ENCODE measurements at regions of chr20 and their contacts with region 1.

Region 1: GRCh38 chr20:37020636-37021035 is 69.1 kb upstream of the SAMHD1 start:
- DNase-seq: no peak
- ATAC-seq: no peak
- H3K4me3 ChIP-seq: no peak overlapping the region
- H3K27ac ChIP-seq: no peak overlapping the region
- H3K4me1 ChIP-seq: no peaks in the 10 kb centered on the region
- H3K27me3 ChIP-seq: no peaks in the 10 kb centered on the region
- CTCF ChIP-seq: no peak

Region 2: DNA sequence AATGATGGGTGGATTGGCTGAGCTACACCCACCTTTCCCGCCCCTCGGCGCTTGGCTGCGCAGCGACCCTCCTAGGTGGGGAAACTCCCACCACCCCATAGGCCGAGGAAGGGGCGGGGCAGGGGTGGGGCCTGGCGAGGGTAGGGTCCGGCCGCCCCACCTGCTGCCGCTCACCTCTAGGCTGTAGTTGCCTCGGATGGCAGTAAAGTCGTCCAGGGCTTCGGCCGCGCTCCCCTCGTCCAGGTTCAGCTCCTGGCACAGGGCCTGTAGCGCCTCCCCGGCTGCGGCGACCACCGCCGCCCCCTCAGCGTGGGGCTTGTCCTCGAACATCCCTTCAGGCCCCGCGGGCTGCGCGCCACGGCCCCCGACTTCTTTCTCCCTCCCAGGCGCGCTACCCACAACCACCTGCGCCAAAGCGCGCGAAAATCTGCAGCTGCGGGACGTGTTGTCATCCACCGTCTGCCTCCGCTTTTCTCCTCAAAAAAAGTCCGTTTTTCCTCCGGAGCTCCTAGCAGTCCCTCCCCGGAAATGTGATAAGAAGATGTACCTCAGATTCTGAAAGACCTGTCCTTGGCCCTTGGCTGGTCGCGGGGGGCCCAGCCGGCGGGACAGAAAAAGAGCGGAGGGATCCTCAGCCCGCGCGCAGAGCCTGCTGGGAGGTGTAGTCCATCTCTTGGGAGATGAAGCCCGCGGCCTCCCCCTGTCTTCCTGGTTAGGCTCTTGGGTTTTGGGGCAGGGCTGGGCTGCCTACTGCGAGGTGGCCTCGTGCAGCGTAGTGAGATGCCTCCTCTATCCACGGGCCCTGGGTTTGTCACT is 75.2 kb after region 1 on chr20 and contains the start of gene RBL1:
- CTCF ChIA-PET with region 1: no interaction called
- POLR2A ChIA-PET with region 1: no interaction called
- in situ Hi-C with region 1: no loop called
- intact Hi-C with region 1: no loop called
- DNase-seq: peak; percentile 57
- ATAC-seq: peak; percentile 93
- H3K4me3 ChIP-seq: peak within 1 kb of the TSS; percentile 67 to 93
- H3K27ac ChIP-seq: peak within 1 kb of the TSS; percentile 92
- H3K4me1 ChIP-seq: peaks cover 5% of the 10 kb centered on the region
- H3K27me3 ChIP-seq: no peaks in the 10 kb centered on the region
- CTCF ChIP-seq: no peak
- total RNA-seq, gene RBL1: 14.0 TPM

Region 3: DNA sequence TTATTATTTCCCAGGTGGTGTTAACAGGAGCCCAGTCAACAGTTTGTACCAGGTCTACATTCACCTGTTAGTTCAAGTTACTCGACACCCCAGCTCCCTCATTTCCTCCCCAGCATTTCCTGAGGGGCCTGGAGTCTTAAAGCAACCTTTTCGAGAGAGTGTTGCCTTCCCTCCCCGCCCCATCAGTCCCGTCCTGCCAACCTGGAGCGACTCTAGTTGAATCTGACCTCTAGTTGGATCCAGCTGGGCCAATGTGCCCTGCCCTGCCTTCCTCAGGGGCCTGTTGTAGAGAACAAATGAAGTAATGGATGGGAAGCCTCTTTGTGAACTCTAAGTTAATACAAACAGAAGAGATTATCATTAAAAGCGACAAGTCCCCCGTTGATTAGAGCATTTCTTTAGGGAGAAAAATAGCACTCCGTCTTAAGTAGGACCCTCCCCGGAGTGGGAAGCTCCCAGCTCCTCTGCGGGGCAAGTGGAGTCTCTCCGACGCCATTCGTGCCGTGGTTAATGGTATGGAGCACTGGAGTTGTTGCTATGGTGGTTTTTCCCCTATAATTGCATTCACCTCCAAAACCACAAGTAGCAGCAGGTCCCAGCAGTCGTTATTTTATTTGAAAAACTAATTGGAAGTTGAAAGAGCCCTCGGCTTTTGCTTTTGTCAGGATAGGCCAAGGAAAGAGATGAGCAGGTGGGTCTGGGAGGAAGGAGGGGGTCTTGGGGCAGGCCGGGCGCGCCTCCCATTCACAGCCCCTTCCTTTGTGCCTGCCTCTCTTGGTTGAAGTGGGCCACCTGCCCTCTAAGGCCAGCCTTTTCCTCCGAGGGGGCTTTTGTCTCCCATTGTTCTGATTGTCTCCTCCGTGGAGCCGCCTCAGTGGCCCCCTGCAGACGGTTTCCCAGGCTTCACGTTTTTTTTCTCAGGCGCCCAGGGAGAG is 224.8 kb after region 1 on chr20:
- CTCF ChIA-PET with region 1: interaction called, 10 read pairs
- POLR2A ChIA-PET with region 1: no interaction called
- in situ Hi-C with region 1: no loop called
- intact Hi-C with region 1: no loop called
- DNase-seq: no peak
- ATAC-seq: no peak
- H3K4me3 ChIP-seq: no peak overlapping the region
- H3K27ac ChIP-seq: no peak overlapping the region
- H3K4me1 ChIP-seq: no peaks in the 10 kb centered on the region
- H3K27me3 ChIP-seq: no peaks in the 10 kb centered on the region
- CTCF ChIP-seq: no peak

Measured in Panc1 (cell line).